ENCODE measurements at regions of chr16 and their contacts with region 1.

Region 1: GRCh38 chr16:3087243-3088235 is 11.6 kb downstream of the ZSCAN10 start:
- DNase-seq: peak in 1 of 2 experiments; percentile 26
- ATAC-seq: peak; percentile 64 to 75
- H3K4me3 ChIP-seq: no peak overlapping the region
- H3K27ac ChIP-seq: no peak overlapping the region
- H3K4me1 ChIP-seq: no peaks in the 10 kb centered on the region
- CTCF ChIP-seq: peak; percentile 14; the same call in 1 of the 3 replicates
- EP300 ChIP-seq: no peak
- POLR2A ChIP-seq: no peak
- RAD21 ChIP-seq: 0 out of 5 replicates have a peak, but pooled peaks of 1 of the 2 experiments have one; percentile 6

Region 2: DNA sequence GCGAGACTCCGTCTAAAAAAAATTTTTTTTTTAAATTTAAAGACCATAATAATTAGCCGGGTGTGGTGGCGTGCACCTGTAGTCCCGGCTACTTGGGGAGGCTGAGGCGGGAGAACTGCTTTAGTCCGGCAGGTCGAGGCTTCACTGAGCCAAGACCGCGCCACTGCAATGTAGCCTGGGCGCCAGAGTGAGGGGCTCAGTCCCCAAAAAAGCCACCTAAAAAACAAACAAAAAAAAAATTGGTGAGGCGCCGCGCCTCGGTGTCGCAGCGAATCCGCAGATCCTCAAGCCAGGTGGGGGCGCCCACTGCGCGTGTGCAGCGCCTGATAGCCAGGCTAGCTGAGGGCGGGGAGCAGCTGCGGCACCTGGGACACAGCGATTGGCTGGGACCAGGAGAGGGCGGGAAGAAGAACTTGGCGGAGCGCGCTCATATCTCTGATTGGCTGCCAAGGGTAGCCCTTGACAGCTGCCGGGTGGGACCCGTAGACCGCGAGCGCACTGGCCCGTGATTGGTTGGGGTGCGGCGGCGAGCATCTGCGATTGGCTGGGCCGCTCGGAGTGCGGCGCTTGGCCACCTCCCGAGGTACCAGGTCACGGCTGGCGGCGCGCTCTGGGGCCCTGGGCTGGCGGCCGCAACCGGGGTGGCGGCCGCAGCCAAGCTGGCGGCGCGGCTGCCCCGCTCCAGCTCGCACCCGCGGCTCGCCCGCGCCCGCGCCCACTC is 83.8 kb before region 1 on chr16:
- CTCF ChIA-PET with region 1: no interaction called
- POLR2A ChIA-PET with region 1: no interaction called
- DNase-seq: peak; percentile 99 to 100
- ATAC-seq: peak; percentile 96 to 98
- H3K4me3 ChIP-seq: peak overlapping the region; percentile 65
- H3K27ac ChIP-seq: peak overlapping the region; percentile 76 to 87; a peak in 5 of 6 replicates
- H3K4me1 ChIP-seq: peaks cover 15% of the 10 kb centered on the region; the same call in 2 of the 3 replicates
- CTCF ChIP-seq: peak; percentile 71
- EP300 ChIP-seq: no peak
- POLR2A ChIP-seq: 0 out of 2 replicates have a peak, but pooled peaks have one; percentile 26
- RAD21 ChIP-seq: peak; percentile 74 to 85

Region 3: GRCh38 chr16:3074860-3075522 is 12.5 kb before region 1 on chr16:
- CTCF ChIA-PET with region 1: interaction called, 13 read pairs
- POLR2A ChIA-PET with region 1: no interaction called
- DNase-seq: no peak
- ATAC-seq: no peak
- H3K4me3 ChIP-seq: no peak overlapping the region
- H3K27ac ChIP-seq: no peak overlapping the region
- H3K4me1 ChIP-seq: no peaks in the 10 kb centered on the region
- CTCF ChIP-seq: no peak
- EP300 ChIP-seq: no peak
- POLR2A ChIP-seq: no peak
- RAD21 ChIP-seq: no peak

Region 4: DNA sequence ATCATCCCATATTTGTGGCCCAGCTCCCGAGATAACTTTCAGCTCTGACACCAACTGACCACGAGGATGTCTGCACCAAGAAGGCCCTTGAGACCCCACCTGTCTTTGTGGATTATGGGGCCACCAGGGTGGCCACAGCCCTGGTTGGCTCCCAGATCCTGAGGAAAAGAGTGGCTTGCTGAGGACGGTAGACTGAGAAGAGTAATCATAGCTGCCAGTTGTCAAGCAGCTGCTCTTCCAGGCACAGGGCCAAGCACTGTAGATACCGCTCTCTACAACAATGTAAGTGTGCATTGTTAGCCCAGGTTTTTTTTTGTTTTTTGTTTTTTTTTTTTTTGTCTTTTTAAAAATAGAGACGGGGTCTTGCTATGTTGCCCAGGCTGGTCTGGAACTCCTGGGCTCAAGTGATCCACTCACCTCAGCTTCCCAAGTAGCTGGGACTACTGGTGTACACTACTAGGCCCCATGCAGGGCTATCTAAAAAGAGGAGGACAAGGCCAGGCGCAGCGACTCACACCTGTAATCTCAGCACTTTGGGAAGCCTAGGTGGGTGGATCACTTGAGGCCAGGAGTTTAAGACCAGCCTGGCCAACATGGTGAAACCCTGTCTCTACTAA is 34.4 kb after region 1 on chr16:
- CTCF ChIA-PET with region 1: no interaction called
- POLR2A ChIA-PET with region 1: no interaction called
- DNase-seq: no peak
- ATAC-seq: no peak
- H3K4me3 ChIP-seq: no peak overlapping the region
- H3K27ac ChIP-seq: no peak overlapping the region
- H3K4me1 ChIP-seq: peaks cover 8% of the 10 kb centered on the region; the same call in 1 of the 3 replicates
- CTCF ChIP-seq: no peak
- EP300 ChIP-seq: no peak
- POLR2A ChIP-seq: no peak
- RAD21 ChIP-seq: no peak